BJ (cell line): ENCODE measurements at regions of chr17 and their contacts with region 1.

Region 1: GRCh38 chr17:57861000-57861789 is 11.4 kb upstream of the MRPS23 start:
- DNase-seq: no peak
- H3K4me3 ChIP-seq: peak overlapping the region; percentile 42
- H3K27me3 ChIP-seq: no peaks in the 10 kb centered on the region
- CTCF ChIP-seq: no peak

Region 2: GRCh38 chr17:57849874-57850754 is 11.1 kb before region 1 on chr17 and contains the start of gene MRPS23:
- CTCF ChIA-PET with region 1: interaction called, 11 read pairs
- POLR2A ChIA-PET with region 1: no interaction called
- DNase-seq: peak; percentile 90
- H3K4me3 ChIP-seq: peak within 1 kb of the TSS; percentile 75
- H3K27me3 ChIP-seq: no peaks in the 10 kb centered on the region
- CTCF ChIP-seq: no peak
- polyA plus RNA-seq, gene MRPS23: 33.7 and 34.1 TPM in 2 replicates

Region 3: GRCh38 chr17:57946798-57947358 is 85.7 kb after region 1 on chr17:
- CTCF ChIA-PET with region 1: interaction called, 27 read pairs
- POLR2A ChIA-PET with region 1: no interaction called
- DNase-seq: no peak
- H3K4me3 ChIP-seq: peak overlapping the region; percentile 37
- H3K27me3 ChIP-seq: no peaks in the 10 kb centered on the region
- CTCF ChIP-seq: no peak

Region 4: GRCh38 chr17:57955183-57955931 is 94.2 kb after region 1 on chr17 and contains the start of gene CUEDC1:
- CTCF ChIA-PET with region 1: interaction called, 27 read pairs
- POLR2A ChIA-PET with region 1: no interaction called
- DNase-seq: no peak
- H3K4me3 ChIP-seq: peak within 1 kb of the TSS; percentile 69
- H3K27me3 ChIP-seq: no peaks in the 10 kb centered on the region
- CTCF ChIP-seq: 0 out of 2 replicates have a peak, but pooled peaks have one; percentile 26
- polyA plus RNA-seq, gene CUEDC1: 27.3 and 48.5 TPM in 2 replicates

Region 5: GRCh38 chr17:57970706-57971105 is 109.5 kb after region 1 on chr17:
- CTCF ChIA-PET with region 1: interaction called, 10 read pairs
- POLR2A ChIA-PET with region 1: interaction called, 5 read pairs
- DNase-seq: no peak
- H3K4me3 ChIP-seq: no peak overlapping the region
- H3K27me3 ChIP-seq: no peaks in the 10 kb centered on the region
- CTCF ChIP-seq: no peak

Region 6: DNA sequence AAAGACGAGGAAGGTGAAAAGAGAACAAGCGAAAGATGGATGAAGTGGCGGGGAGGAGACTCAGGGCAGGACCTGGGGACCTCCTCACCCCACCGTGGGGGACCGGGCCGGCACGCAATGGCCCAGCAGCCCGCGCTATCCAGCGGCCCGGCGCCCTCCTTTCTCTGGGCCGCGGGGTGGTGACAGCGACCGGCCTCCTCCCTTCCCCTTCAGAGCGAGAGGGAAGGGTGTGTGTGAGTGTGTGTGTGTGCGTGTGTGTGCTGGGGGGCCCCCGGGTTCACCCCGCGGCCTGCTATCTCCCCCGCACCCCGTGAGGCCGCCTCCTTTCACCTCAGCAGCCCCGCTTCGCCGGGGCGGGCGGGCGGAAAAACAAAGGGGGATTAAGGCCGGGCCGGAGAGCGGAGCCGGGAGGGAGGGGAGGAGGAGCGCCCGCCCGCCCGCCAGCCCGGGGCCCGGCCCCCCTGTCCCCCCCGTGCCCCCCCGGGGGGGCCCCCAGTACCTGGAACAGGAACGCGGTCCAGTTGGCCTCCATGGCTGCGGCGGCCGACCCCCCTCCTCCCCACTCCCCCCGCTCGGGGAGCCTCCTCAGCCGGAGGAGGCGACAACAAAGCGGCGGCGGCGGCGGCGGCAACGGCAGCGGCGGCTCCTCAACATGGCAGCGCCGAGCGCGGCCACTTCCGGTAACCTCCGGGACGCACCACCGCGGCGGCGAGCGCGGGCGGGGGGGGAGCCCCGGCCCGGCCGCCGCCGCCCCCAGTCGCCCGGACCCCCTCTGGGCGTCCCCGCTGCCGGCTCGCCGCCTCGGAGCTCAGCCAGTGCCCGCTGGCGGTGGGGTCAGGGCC is 126.6 kb after region 1 on chr17 and contains the start of gene VEZF1:
- CTCF ChIA-PET with region 1: interaction called, 371 read pairs
- POLR2A ChIA-PET with region 1: interaction called, 8 read pairs
- DNase-seq: no peak
- H3K4me3 ChIP-seq: peak within 1 kb of the TSS; percentile 79
- H3K27me3 ChIP-seq: no peaks in the 10 kb centered on the region
- CTCF ChIP-seq: no peak
- polyA plus RNA-seq, gene VEZF1: 27.3 and 30.2 TPM in 2 replicates

Region 7: GRCh38 chr17:58112970-58113631 is 251.9 kb after region 1 on chr17:
- CTCF ChIA-PET with region 1: interaction called, 15 read pairs
- POLR2A ChIA-PET with region 1: no interaction called
- DNase-seq: no peak
- H3K4me3 ChIP-seq: no peak overlapping the region
- H3K27me3 ChIP-seq: peaks cover 3% of the 10 kb centered on the region
- CTCF ChIP-seq: peak; percentile 95